IMR-90 (cell line): ENCODE measurements at regions of chr22 and their contacts with region 1.

Region 1: DNA sequence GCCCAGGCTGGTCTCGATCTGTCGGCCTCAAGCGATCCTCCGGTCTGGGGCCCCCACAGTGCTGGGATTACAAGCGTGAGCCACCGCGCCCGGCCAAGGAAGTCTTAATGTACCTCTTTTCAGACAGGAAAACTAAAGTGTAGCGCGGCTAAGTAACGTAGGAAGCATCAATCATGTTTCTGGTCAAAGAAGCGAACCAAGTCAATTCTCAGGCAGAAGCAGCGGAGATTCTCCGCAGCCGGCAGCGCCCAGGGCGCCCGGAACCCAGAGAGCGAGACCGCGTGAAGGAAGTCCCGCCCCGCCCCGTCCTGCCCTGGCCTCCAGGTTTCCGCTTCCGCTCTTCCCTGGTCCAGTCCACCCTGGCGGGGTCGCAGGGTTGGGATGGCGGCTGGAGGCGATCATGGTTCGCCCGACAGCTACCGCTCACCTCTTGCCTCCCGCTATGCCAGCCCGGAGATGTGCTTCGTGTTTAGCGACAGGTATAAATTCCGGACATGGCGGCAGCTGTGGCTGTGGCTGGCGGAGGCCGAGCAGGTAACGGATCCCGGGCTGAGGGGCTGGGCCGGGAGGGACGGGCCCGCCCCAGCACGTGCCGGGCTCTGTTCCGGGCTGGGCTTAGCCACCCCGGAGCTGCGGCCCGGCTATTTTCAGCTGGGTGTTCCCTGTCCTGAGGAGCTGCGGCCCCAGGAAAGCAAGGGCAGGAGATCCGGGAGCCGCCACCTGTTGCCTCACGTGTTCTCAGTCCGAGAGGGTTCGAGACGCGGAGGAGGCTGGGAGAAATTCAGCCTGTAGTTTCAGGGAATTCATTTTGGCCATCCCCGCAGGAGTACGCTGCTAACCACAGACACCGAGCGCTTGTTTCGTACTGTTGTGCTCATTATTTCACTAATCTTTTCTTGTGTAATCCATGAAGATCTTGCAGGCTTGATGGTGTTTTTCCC is at the start of gene ADSL:
- DNase-seq: peak; percentile 79
- ATAC-seq: peak; percentile 97
- H3K4me3 ChIP-seq: peak within 1 kb of the TSS; percentile 88
- H3K27ac ChIP-seq: peak within 1 kb of the TSS; percentile 95
- H3K4me1 ChIP-seq: no peaks in the 10 kb centered on the region
- H3K27me3 ChIP-seq: no peaks in the 10 kb centered on the region
- CTCF ChIP-seq: 0 out of 2 replicates have a peak, but pooled peaks have one; percentile 19
- POLR2A ChIP-seq: peak; percentile 83
- RAD21 ChIP-seq: no peak
- total RNA-seq, gene ADSL: 181 and 229 TPM in 2 replicates

Region 2: GRCh38 chr22:39532215-39533071 is 814.0 kb before region 1 on chr22 and contains the start of gene RPS19BP1:
- CTCF ChIA-PET with region 1: no interaction called
- POLR2A ChIA-PET with region 1: no interaction called
- dilution Hi-C with region 1: no loop called
- in situ Hi-C with region 1: loop called (anchors 10 kb)
- intact Hi-C with region 1: loop called (anchors 2 kb)
- DNase-seq: peak; percentile 99
- ATAC-seq: peak; percentile 79
- H3K4me3 ChIP-seq: peak within 1 kb of the TSS; percentile 74
- H3K27ac ChIP-seq: peak within 1 kb of the TSS; percentile 85
- H3K4me1 ChIP-seq: peaks cover 7% of the 10 kb centered on the region
- H3K27me3 ChIP-seq: no peaks in the 10 kb centered on the region
- CTCF ChIP-seq: no peak
- POLR2A ChIP-seq: peak; percentile 78
- RAD21 ChIP-seq: no peak
- total RNA-seq, gene RPS19BP1: 33.0 and 33.6 TPM in 2 replicates

Region 3: DNA sequence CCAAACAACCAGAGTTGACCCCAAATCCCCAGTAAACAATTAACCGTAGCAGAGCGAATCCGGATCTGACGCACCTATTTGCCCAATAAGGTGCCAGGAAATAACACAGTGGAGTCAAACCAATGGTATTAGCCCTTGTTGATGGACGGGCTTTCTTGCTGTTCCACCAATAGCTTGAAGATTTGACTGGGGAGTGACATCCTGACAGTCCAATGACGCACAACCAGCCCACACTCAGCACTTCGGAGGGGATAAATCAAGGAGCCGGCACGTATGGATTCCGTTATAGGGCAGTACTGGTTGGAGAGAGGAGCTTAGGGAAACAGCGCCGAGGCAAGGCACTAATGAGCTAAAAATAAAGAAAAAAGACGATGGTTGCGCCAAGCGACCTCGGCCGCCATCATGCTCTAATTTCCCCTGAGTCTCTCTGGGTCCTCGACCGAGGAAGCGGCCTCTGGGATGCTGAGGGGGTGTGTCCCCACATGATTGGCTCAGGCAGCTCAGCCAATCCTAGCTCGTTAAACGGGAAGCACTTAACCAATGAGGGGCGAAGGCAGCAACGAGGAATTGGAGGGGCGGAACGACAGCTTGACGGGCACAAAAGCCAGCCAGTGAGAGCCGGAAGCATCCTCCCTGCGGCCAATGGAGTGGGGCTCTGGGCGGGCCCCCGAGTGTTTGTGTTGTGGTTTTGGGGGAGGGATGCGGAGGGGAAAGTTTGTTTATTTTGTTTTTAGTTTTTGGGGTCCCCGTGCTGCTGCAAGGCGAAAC is 302.2 kb before region 1 on chr22:
- CTCF ChIA-PET with region 1: interaction called, 5 read pairs
- POLR2A ChIA-PET with region 1: no interaction called
- dilution Hi-C with region 1: no loop called
- in situ Hi-C with region 1: loop called (anchors 10 kb)
- intact Hi-C with region 1: loop called (anchors 1 kb)
- DNase-seq: peak; percentile 99
- ATAC-seq: peak; percentile 94
- H3K4me3 ChIP-seq: peak overlapping the region; percentile 88
- H3K27ac ChIP-seq: peak overlapping the region; percentile 62
- H3K4me1 ChIP-seq: no peaks in the 10 kb centered on the region
- H3K27me3 ChIP-seq: peaks cover 19% of the 10 kb centered on the region
- CTCF ChIP-seq: no peak
- POLR2A ChIP-seq: peak; percentile 90
- RAD21 ChIP-seq: no peak

Region 4: GRCh38 chr22:40270748-40271373 is 75.6 kb before region 1 on chr22:
- CTCF ChIA-PET with region 1: no interaction called
- POLR2A ChIA-PET with region 1: interaction called, 11 read pairs
- dilution Hi-C with region 1: no loop called
- in situ Hi-C with region 1: no loop called
- intact Hi-C with region 1: loop called (anchors 2 kb)
- DNase-seq: no peak
- ATAC-seq: no peak
- H3K4me3 ChIP-seq: no peak overlapping the region
- H3K27ac ChIP-seq: no peak overlapping the region
- H3K4me1 ChIP-seq: no peaks in the 10 kb centered on the region; the same call in 1 of the 2 replicates
- H3K27me3 ChIP-seq: no peaks in the 10 kb centered on the region
- CTCF ChIP-seq: no peak
- POLR2A ChIP-seq: no peak
- RAD21 ChIP-seq: no peak

Region 5: GRCh38 chr22:40310081-40310767 is 36.2 kb before region 1 on chr22:
- CTCF ChIA-PET with region 1: interaction called, 3 read pairs
- POLR2A ChIA-PET with region 1: no interaction called
- dilution Hi-C with region 1: no loop called
- in situ Hi-C with region 1: no loop called
- intact Hi-C with region 1: loop called (anchors 5 kb)
- DNase-seq: peak; percentile 93
- ATAC-seq: peak; percentile 95
- H3K4me3 ChIP-seq: peak overlapping the region; percentile 4; the same call in 1 of the 2 replicates
- H3K27ac ChIP-seq: peak overlapping the region; percentile 19; the same call in 1 of the 2 replicates
- H3K4me1 ChIP-seq: peaks cover 10% of the 10 kb centered on the region
- H3K27me3 ChIP-seq: no peaks in the 10 kb centered on the region
- CTCF ChIP-seq: no peak
- POLR2A ChIP-seq: no peak
- RAD21 ChIP-seq: 0 out of 2 replicates have a peak, but pooled peaks have one; percentile 2